Mammary epithelial cell (primary cell): ENCODE measurements at regions of chr5 and their contacts with region 1.

Region 1: GRCh38 chr5:168422431-168422830 is 63.8 kb upstream of the RARS1 start:
- DNase-seq: no peak
- H3K4me3 ChIP-seq: no peak overlapping the region
- H3K27ac ChIP-seq: no peak overlapping the region
- H3K4me1 ChIP-seq: no peaks in the 10 kb centered on the region
- H3K27me3 ChIP-seq: no peaks in the 10 kb centered on the region
- CTCF ChIP-seq: peak; percentile 22 to 56

Region 2: DNA sequence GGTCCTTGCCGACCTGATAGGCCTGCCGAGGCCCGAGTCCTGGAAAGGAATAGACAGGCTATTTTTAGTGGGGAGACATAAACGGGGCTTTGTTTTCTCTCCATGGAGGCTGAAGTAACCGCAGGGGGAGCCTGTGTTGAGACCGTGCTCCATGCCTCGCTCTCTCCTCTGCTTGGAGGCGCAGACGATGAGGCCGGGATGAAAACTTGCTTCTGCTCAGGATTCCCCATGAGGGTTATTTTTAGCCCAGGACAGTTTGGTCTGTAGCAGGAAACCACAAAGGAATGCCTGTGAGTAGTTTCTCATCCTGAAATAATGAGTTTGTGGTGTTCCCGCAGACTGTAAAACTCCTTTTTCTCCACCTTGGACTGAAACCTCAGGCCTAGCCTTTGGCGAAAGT is 18.1 kb before region 1 on chr5:
- CTCF ChIA-PET with region 1: no interaction called
- dilution Hi-C with region 1: no loop called
- in situ Hi-C with region 1: no loop called
- intact Hi-C with region 1: loop called (anchors 2 kb)
- DNase-seq: peak; percentile 92
- H3K4me3 ChIP-seq: no peak overlapping the region
- H3K27ac ChIP-seq: peak overlapping the region; percentile 20
- H3K4me1 ChIP-seq: peaks cover 44% of the 10 kb centered on the region
- H3K27me3 ChIP-seq: no peaks in the 10 kb centered on the region
- CTCF ChIP-seq: no peak